GM12878 (cell line): ENCODE measurements at regions of chr17 and their contacts with region 1.

Region 1: GRCh38 chr17:35849469-35850348 is 19.0 kb downstream of the HEATR9 start:
- DNase-seq: peak; percentile 20
- ATAC-seq: peak; percentile 95
- H3K4me3 ChIP-seq: no peak overlapping the region
- H3K27ac ChIP-seq: no peak overlapping the region
- H3K4me1 ChIP-seq: no peaks in the 10 kb centered on the region
- H3K27me3 ChIP-seq: no peaks in the 10 kb centered on the region
- CTCF ChIP-seq: peak; percentile 73 to 79 (median 75)
- EP300 ChIP-seq: no peak
- POLR2A ChIP-seq: no peak
- RAD21 ChIP-seq: peak; percentile 91

Region 2: DNA sequence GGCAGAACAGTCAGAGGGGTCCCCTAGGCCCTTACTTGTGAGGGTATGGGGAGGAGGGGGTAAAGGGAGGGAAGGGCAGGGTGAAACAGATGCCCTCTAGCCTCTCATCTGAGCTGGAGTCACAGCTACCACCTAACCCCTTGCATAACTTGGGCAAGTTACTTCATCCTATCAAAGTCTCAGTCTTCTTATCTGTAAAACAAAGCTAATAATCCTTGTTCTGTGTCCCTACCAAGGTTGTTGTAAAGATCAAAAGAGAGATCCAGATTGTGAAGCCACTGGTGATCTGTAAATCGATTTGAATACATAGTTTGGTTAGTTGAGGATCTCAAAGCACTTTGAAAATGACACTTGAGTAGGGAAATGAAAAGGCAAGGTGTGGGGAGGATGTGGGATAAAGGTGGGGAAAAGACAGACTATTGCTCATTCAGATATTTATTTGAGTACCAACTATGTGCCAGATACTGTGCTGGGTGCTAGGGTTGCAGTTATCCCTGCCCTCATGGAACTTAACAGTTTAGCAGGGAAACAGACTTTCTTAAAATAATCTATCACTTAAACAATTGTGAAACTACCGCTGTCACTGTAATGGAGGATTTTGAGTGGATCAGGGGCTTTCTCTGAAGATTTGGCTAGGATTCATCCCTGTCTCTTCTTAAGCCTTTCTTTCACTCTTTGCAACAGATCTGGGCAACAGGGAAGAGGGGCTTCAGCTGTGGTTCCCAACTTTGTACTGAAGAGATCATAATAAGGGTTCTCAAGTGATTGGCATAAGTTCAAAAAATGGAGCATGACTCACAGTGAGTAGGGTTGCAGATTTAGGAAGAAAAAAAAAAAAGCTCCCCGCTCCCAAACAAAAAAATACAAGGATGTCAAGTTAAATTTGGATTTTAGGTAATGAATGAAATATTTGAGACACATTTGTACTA is 16.0 kb after region 1 on chr17:
- CTCF ChIA-PET with region 1: interaction called, 10 read pairs
- POLR2A ChIA-PET with region 1: no interaction called
- RAD21 ChIA-PET with region 1: no interaction called
- SMC1A ChIA-PET with region 1: interaction called, 3 read pairs
- in situ Hi-C with region 1: no loop called
- intact Hi-C with region 1: no loop called
- DNase-seq: no peak
- ATAC-seq: no peak
- H3K4me3 ChIP-seq: no peak overlapping the region
- H3K27ac ChIP-seq: no peak overlapping the region
- H3K4me1 ChIP-seq: no peaks in the 10 kb centered on the region
- H3K27me3 ChIP-seq: no peaks in the 10 kb centered on the region
- CTCF ChIP-seq: no peak
- EP300 ChIP-seq: no peak
- POLR2A ChIP-seq: no peak
- RAD21 ChIP-seq: no peak

Region 3: GRCh38 chr17:35879773-35880654 is 30.3 kb after region 1 on chr17 and contains the start of gene CCL5:
- CTCF ChIA-PET with region 1: interaction called, 11 read pairs
- POLR2A ChIA-PET with region 1: interaction called, 3 read pairs
- RAD21 ChIA-PET with region 1: interaction called, 11 read pairs
- SMC1A ChIA-PET with region 1: interaction called, 9 read pairs
- in situ Hi-C with region 1: no loop called
- intact Hi-C with region 1: no loop called
- DNase-seq: peak; percentile 84
- ATAC-seq: peak; percentile 95
- H3K4me3 ChIP-seq: peak within 1 kb of the TSS; percentile 26; the same call in 1 of the 2 replicates
- H3K27ac ChIP-seq: peak within 1 kb of the TSS; percentile 69
- H3K4me1 ChIP-seq: peaks cover 27% of the 10 kb centered on the region
- H3K27me3 ChIP-seq: no peaks in the 10 kb centered on the region
- CTCF ChIP-seq: no peak
- EP300 ChIP-seq: peak; percentile 34 to 81; a peak in 2 of 4 replicates
- POLR2A ChIP-seq: peak; percentile 97
- RAD21 ChIP-seq: no peak; the same call in 1 of the 2 replicates
- polyA plus RNA-seq, gene CCL5: 139 to 186 TPM

Region 4: DNA sequence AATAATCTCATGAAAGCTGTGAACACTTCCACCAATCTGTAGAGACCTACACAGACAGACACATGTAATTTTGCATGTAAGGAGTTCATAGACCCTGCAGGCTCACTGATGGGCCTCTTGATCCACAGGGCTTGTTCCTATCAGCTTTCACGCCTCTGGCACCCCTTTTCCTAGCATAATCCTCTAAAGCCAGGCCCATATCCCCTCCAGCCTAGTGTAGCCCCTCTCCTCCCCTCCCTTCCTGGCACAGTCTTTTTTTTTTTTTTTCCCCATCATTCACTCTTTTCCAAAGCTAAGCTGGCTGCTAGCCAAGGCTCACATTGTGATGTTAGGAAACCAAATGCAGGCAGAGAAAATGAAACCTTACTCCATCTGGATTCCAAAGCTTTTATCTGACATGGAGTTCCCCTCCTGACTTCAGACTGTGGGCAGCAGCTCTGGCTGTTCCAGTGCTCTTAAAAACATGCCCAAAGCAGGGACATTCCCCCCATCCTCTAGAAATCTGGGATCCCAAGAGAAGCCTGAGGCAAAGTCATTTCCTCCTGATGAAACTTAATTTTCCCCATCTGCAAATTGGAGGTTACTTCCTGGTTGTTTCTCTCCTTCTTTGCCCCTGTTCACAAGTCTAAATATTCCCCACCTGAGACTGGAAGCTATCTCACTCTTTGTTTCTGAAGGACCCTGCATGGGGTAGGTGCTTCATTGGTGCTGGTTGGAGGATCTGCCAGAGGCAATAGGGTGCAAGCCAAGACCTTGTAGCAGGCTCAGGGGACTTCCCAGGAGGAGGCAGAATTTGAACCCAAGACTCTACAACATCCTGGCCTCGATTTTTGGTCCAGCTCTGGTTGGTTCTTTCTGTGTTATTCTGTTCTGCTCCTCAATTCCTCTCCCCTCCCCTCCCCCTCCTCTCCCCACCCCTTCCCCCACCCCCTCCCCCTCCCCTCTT is 40.4 kb after region 1 on chr17:
- CTCF ChIA-PET with region 1: interaction called, 12 read pairs
- POLR2A ChIA-PET with region 1: no interaction called
- RAD21 ChIA-PET with region 1: interaction called, 5 read pairs
- SMC1A ChIA-PET with region 1: interaction called, 7 read pairs
- in situ Hi-C with region 1: no loop called
- intact Hi-C with region 1: no loop called
- DNase-seq: no peak
- ATAC-seq: peak; percentile 9; the same call in 2 of the 3 replicates
- H3K4me3 ChIP-seq: no peak overlapping the region
- H3K27ac ChIP-seq: no peak overlapping the region
- H3K4me1 ChIP-seq: peaks cover 28% of the 10 kb centered on the region
- H3K27me3 ChIP-seq: no peaks in the 10 kb centered on the region
- CTCF ChIP-seq: no peak
- EP300 ChIP-seq: no peak
- POLR2A ChIP-seq: no peak
- RAD21 ChIP-seq: no peak

Region 5: GRCh38 chr17:35930211-35931065 is 80.7 kb after region 1 on chr17 and contains the start of gene RDM1:
- CTCF ChIA-PET with region 1: interaction called, 35 read pairs
- POLR2A ChIA-PET with region 1: no interaction called
- RAD21 ChIA-PET with region 1: interaction called, 15 read pairs
- SMC1A ChIA-PET with region 1: interaction called, 33 read pairs
- in situ Hi-C with region 1: no loop called
- intact Hi-C with region 1: loop called (anchors 5 kb)
- DNase-seq: peak; percentile 53
- ATAC-seq: peak; percentile 98
- H3K4me3 ChIP-seq: peak within 1 kb of the TSS; percentile 62
- H3K27ac ChIP-seq: peak within 1 kb of the TSS; percentile 51
- H3K4me1 ChIP-seq: peaks cover 5% of the 10 kb centered on the region; the same call in 1 of the 2 replicates
- H3K27me3 ChIP-seq: no peaks in the 10 kb centered on the region
- CTCF ChIP-seq: no peak
- EP300 ChIP-seq: peak in 1 of 2 experiments; percentile 3; a peak in 1 of 4 replicates
- POLR2A ChIP-seq: peak; percentile 77
- RAD21 ChIP-seq: no peak
- polyA plus RNA-seq, gene RDM1: 12.0 to 15.9 TPM

Region 6: DNA sequence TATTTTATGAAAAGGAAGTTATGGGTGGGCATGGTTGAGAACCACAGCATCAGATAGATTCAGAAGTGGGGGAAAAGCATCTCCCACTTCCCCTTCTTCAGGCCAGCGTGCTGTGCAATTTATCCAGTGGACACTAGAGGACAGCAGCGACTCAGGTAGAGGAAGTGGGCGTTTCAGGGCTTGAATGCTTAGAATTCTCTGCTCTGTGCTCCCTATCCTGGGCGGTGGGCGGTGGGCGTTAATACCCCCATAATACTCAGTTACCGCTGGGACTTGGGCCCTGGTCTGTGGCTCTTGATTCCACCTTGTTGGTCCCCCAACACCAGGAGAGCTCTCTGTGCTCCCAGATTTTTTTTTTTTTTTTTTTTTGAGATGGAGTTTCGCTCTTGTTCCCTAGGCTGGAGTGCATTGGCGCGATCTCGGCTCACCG is 97.5 kb after region 1 on chr17:
- CTCF ChIA-PET with region 1: interaction called, 38 read pairs
- POLR2A ChIA-PET with region 1: interaction called, 3 read pairs
- RAD21 ChIA-PET with region 1: interaction called, 4 read pairs
- SMC1A ChIA-PET with region 1: interaction called, 8 read pairs
- in situ Hi-C with region 1: no loop called
- intact Hi-C with region 1: loop called (anchors 5 kb)
- DNase-seq: no peak
- ATAC-seq: peak; percentile 98
- H3K4me3 ChIP-seq: no peak overlapping the region
- H3K27ac ChIP-seq: no peak overlapping the region
- H3K4me1 ChIP-seq: no peaks in the 10 kb centered on the region
- H3K27me3 ChIP-seq: no peaks in the 10 kb centered on the region; a peak in 1 of 4 replicates
- CTCF ChIP-seq: peak; percentile 84 to 97 (median 96)
- EP300 ChIP-seq: no peak
- POLR2A ChIP-seq: no peak
- RAD21 ChIP-seq: peak; percentile 89

Region 7: DNA sequence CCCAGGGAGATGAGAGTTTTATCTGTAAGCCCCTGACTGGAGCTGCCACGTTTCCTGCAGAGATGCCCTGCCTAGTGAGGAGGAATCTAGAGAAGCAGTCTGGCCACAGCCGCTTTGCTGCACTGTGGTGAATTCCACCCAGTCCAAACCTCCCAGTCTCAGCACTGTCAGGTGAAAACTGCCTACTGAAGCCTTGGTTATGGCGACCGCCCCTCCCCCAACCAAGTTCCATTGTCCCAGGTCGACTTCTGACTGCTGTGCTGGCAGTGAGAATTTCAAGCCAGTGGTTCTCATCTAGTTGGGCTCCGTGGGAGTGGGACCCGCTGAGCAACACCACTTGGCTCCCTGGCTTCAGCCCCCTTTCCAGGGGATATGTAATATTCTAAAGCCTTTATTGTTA is 104.0 kb after region 1 on chr17:
- CTCF ChIA-PET with region 1: interaction called, 38 read pairs
- POLR2A ChIA-PET with region 1: no interaction called
- RAD21 ChIA-PET with region 1: interaction called, 4 read pairs
- SMC1A ChIA-PET with region 1: interaction called, 8 read pairs
- in situ Hi-C with region 1: no loop called
- intact Hi-C with region 1: loop called (anchors 5 kb)
- DNase-seq: no peak
- ATAC-seq: no peak
- H3K4me3 ChIP-seq: no peak overlapping the region
- H3K27ac ChIP-seq: no peak overlapping the region
- H3K4me1 ChIP-seq: no peaks in the 10 kb centered on the region
- H3K27me3 ChIP-seq: no peaks in the 10 kb centered on the region; a peak in 1 of 4 replicates
- CTCF ChIP-seq: no peak
- EP300 ChIP-seq: no peak
- POLR2A ChIP-seq: no peak
- RAD21 ChIP-seq: no peak